ENCODE measurements at regions of chr20 and their contacts with region 1.

Region 1: DNA sequence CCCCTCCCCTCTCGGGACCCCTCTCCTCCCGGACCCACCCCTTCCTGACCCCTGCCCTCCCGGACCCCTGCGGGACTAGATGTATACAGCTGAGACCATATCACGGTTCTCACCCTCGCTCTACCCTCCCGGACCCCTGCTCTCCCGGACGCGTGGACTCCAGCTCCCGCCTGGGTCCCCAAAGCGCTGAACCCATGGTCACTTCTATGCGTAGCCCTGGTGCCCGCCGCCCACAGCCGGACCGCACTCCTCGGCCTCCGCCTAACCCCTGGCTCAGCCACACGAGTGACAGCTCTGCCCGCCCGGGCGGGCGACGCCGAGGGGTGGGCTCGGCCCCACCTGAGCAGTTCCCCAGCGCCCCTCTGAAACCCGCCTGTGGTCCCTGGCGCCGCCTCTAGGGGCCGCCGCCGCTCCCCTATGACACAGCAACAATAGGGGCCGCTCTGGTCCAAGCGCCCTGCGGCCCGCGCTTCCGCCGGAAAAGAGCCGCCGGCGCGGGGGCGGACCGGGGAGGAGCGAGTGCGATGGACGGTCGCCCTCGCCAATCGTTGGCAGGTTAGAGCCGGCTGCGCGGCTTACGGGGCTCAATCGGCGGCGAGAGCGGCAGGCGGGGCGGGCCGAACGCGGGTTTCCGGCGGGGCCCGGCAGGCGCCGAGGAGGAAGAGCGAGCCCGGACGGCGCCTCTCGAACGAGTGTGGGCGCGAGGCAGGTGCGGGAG is at the start of gene ADRM1:
- DNase-seq: peak; percentile 97
- H3K4me3 ChIP-seq: peak within 1 kb of the TSS; percentile 69 to 95 (median 88)
- H3K27ac ChIP-seq: peak within 1 kb of the TSS; percentile 65
- H3K4me1 ChIP-seq: peaks cover 32% of the 10 kb centered on the region
- H3K27me3 ChIP-seq: no peaks in the 10 kb centered on the region
- CTCF ChIP-seq: peak; percentile 46 to 94
- total RNA-seq, gene ADRM1: 139 to 140 TPM

Region 2: DNA sequence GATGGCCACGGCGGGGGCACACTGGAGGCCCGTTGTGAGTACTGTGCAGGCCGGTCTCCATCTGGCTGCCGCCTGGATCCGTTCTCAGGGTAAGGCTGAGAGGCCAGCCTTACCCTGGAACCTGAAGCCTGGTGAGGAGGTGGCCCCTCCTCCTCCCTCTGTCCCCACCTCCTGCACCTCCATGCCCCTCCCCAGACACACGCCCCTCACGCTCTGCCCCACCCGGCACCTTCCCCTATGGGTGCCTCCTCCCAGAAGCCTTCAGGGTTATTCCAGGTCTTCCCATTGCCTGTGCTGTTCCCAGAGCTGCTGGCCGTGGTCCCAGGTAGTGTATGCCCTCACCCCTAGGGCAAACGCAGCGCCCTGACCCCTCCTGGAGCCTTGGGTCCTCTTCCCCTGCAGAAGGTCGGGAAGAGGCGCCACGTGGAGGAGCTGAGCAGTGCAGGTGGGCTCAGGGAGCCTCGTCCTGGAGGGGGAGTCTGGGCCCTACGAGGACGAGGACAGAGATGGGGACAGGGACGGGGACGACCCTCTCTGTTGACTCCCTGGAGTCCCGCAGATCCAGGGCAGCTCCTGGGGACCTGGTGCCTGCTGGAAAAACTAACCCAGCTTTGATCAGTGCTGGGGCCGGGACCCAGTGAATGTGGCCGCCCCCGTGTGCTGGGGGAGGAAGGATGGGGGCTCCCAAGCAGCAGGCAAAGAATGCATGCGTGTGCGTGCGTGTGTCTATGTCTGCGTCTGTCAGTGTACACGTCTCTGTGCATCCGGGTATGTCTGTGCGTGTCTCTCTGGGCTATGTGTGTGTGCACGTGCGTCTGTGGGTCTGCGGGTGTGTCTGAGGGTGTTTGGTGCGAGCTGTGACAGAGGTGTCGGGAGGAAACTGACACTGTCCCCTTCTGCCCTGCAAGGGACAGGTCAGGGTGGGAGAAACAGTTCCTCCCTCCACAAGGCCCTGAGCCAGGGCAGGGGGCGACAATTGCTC is 74.2 kb before region 1 on chr20:
- CTCF ChIA-PET with region 1: no interaction called
- dilution Hi-C with region 1: no loop called
- in situ Hi-C with region 1: no loop called
- intact Hi-C with region 1: no loop called
- DNase-seq: no peak
- H3K4me3 ChIP-seq: no peak overlapping the region
- H3K27ac ChIP-seq: no peak overlapping the region
- H3K4me1 ChIP-seq: no peaks in the 10 kb centered on the region
- H3K27me3 ChIP-seq: peaks cover 5% of the 10 kb centered on the region
- CTCF ChIP-seq: no peak

Region 3: DNA sequence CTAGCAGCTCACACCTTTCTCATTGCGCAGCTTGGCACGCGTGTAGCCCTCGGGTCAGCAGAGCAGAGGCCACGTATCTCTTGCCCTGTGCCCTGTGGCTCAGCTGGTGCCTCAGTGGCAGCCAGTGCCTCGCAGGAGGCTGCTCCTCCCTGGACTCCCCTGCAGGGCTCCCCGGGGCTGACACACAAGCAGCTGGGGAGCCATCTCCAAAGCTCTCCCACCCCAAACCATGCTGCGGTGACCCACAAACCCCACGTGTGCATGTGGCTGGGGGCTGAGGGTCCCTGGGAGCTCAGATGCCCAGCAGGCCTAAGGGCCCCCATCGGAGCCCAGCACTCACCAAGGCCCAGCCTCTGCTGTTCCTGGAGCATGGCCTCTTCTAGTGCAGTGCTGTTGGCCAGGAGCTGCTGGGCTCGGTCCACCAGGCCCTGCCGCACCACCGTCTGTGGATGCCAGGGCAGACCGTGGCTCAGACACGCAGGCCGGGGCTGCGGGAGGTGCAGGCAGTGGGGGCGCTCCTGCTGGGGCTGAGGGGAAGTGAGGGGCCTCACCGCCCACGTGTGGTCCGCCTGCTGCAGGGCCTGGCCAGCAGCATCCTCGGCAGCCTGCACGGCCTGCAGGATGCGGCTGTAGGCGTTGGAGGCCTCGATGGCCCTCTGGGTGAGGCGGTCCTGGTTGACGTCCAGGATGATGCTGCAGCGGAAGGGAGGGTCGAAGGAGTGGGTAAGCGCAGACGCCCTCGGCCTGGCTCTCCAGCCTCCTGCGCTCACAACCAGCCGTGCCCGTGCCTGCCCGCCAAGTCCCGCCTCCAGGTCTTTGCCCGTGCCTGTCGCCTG is 14.0 kb after region 1 on chr20:
- CTCF ChIA-PET with region 1: no interaction called
- dilution Hi-C with region 1: no loop called
- in situ Hi-C with region 1: no loop called
- intact Hi-C with region 1: loop called (anchors 2 kb)
- DNase-seq: peak; percentile 78
- H3K4me3 ChIP-seq: no peak overlapping the region
- H3K27ac ChIP-seq: no peak overlapping the region
- H3K4me1 ChIP-seq: peaks cover 15% of the 10 kb centered on the region
- H3K27me3 ChIP-seq: no peaks in the 10 kb centered on the region
- CTCF ChIP-seq: no peak

Region 4: DNA sequence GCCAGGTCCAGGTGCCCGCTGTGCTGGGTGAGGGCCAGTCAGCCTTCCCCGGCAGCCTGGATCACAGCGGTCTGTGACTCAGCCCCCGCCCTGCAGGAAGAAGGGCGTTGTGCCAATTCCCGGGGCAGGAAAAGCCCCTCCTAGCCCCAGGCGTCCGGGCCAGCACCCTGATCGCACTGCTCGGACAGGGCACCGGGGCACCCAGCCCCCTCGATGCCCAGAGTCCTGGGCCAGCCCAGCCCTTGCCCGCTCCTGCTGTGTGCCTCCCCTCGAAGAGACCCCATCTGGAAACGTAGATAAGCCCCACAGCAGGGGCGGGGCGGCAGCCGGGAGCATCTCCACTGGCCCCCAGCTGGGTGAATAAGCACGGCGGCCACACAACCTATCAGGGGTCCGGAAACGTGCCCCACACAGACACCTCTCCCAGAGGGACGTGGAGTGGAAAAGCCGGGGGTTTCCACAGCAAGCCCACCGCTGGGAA is 54.7 kb after region 1 on chr20:
- CTCF ChIA-PET with region 1: no interaction called
- dilution Hi-C with region 1: no loop called
- in situ Hi-C with region 1: no loop called
- intact Hi-C with region 1: loop called (anchors 2 kb)
- DNase-seq: peak; percentile 58
- H3K4me3 ChIP-seq: no peak overlapping the region
- H3K27ac ChIP-seq: no peak overlapping the region
- H3K4me1 ChIP-seq: peaks cover 87% of the 10 kb centered on the region
- H3K27me3 ChIP-seq: no peaks in the 10 kb centered on the region
- CTCF ChIP-seq: no peak

Region 5: DNA sequence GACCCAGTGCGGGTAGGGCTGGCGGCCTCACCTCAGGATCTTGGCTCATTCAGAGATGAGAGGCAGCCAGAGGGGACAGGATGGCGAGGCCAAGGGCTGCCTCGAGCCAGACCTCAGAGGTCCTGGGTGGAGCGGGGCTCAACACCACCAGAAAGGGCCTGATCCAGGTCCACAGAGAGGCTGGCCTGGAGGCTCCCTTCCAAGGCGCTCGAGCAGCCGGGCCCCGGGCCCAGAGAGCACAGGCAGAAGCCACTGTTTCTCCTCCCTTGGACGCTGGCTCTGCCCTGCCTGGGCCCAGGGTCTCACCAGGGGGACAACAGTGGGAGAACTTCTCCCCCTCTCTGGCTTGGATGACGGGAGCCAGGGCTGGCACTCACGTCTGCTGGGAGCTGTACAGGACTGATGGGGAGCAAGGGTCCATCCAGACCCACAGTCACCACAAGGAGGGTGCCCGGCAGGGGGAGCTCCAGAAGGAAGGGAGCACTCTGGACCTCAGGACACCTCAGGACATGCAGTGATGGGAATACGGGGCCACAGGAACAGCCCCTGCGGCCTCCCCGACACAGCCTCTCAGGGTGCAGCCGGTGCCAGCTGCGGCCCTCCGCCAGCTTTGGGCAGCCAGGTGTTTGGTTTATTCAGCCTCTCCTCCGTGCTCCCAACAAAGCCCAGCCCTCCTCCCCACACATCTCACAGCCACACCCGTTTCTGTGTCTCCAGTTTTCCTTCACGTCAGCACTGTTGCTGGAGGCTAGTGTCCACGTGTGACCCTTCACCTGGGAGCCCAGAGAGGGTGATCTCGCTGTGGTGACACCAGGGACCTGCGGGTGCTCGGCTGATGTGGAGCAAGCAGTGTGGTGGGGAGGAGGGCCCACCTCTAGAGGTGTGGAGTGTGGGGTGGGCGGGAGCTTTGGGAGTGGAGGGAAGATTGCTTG is 93.1 kb after region 1 on chr20:
- CTCF ChIA-PET with region 1: no interaction called
- dilution Hi-C with region 1: loop called (anchors 5 kb)
- in situ Hi-C with region 1: no loop called
- intact Hi-C with region 1: no loop called
- DNase-seq: no peak
- H3K4me3 ChIP-seq: no peak overlapping the region
- H3K27ac ChIP-seq: no peak overlapping the region
- H3K4me1 ChIP-seq: no peaks in the 10 kb centered on the region
- H3K27me3 ChIP-seq: no peaks in the 10 kb centered on the region
- CTCF ChIP-seq: no peak

Region 6: DNA sequence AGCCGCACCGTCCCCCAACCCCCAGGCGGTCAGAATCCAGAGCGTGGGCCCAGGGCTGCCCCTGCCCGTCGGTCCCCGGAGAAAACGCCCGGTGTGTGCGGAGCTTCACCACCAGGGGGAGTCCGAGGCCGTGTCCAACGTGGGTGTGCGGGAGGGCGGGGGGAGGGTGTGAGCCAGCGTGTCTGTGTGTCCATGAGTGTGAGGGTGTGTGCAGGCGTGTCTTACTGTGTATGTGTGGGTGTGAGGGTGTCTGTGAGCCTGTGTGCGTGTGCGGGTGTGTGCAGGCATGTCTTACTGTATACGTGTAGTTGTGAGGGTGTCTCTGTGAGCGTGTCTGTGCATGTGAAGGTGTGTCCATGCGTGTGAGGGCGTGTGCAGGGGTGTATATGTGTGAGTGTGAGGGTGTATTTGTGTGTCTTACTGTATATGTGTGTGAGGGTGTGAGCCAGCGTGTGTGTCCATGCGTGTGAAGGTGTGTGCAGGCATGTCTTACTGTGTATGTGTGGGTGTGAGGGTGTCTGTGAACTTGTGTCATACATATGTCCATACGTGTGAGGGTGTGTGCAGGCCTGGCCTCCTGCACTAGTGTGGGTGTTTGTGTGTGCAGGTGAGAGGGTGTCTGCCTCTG is 197.9 kb after region 1 on chr20:
- CTCF ChIA-PET with region 1: no interaction called
- dilution Hi-C with region 1: no loop called
- in situ Hi-C with region 1: no loop called
- intact Hi-C with region 1: loop called (anchors 2 kb)
- DNase-seq: peak; percentile 29
- H3K4me3 ChIP-seq: no peak overlapping the region
- H3K27ac ChIP-seq: no peak overlapping the region
- H3K4me1 ChIP-seq: peaks cover 9% of the 10 kb centered on the region
- H3K27me3 ChIP-seq: no peaks in the 10 kb centered on the region
- CTCF ChIP-seq: peak; percentile 56 to 86

Region 7: GRCh38 chr20:62616728-62617621 is 314.5 kb after region 1 on chr20:
- CTCF ChIA-PET with region 1: no interaction called
- dilution Hi-C with region 1: no loop called
- in situ Hi-C with region 1: no loop called
- intact Hi-C with region 1: loop called (anchors 2 kb)
- DNase-seq: peak; percentile 26
- H3K4me3 ChIP-seq: no peak overlapping the region
- H3K27ac ChIP-seq: no peak overlapping the region
- H3K4me1 ChIP-seq: no peaks in the 10 kb centered on the region
- H3K27me3 ChIP-seq: no peaks in the 10 kb centered on the region
- CTCF ChIP-seq: peak; percentile 84 to 99

Region 8: DNA sequence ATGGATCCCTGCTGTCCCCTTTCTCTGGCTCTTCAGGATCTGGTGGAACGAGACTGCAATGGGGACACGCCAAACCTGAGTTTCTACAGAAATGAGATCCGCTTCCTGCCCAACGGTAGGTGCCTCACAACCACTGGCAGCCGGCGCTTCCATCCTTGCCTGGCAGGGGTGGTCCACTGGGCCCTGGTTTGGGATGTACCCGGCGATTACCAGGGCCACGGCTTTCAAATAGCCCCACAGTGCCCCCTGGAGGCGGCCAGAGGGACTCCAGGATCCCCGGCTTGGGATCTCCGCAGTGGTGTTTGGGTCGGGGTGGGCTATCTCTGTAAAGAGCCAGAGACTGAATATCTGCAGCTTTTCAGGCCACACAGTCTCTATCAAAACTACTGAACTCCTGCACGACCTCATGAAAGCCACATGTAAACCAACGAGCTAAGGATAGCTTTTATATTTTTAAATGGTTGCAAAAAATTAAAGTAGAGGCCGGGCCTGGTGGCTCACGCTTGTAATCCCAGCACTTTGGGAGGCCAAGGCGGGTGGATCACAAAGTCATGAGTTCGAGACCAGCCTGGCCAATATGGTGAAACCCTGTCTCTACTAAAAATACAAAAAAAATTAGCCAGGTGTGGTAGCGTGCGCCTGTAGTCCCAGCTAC is 505.8 kb after region 1 on chr20:
- CTCF ChIA-PET with region 1: no interaction called
- dilution Hi-C with region 1: no loop called
- in situ Hi-C with region 1: no loop called
- intact Hi-C with region 1: loop called (anchors 2 kb)
- DNase-seq: no peak
- H3K4me3 ChIP-seq: no peak overlapping the region
- H3K27ac ChIP-seq: no peak overlapping the region
- H3K4me1 ChIP-seq: peaks cover 12% of the 10 kb centered on the region
- H3K27me3 ChIP-seq: no peaks in the 10 kb centered on the region
- CTCF ChIP-seq: peak; percentile 68 to 90

Region 9: DNA sequence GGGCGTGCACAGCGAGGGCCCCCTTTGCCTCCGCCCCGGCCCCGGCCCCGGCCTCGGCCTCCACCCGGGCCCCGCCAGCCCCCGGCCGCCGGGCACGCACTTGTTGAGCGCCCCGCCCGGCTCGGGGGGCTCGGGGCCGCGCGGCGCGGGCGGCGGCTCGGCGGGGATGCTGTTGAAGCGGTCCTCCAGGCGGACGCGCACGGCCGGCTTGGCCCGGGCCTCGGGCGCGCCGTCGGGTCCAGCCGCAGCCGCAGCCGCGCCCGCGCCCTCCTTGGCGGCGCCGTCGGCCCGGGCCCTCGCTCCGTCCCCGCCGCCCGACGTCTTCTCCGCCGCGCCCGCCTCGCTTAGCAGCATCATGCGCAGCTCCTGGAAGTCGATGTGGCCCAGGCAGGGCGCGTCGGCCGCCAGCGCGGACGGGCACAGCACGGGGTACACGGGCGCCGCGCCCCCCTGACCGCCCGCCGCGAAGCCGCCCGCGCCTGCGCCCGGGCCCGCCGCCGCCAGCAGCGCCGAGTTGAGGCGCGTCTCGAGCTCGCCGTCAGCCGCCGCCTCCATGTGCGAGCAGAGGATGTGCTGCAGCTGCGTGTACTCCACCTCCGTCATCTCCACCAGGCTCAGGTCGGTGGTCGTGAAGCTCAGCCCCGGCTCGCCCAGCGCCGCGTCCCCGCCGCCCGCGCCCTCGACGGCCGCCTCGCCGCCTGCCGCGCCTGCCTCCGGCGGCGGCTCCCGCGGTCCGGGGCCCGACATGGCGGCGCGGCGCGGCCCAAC is 558.6 kb after region 1 on chr20:
- CTCF ChIA-PET with region 1: no interaction called
- dilution Hi-C with region 1: no loop called
- in situ Hi-C with region 1: no loop called
- intact Hi-C with region 1: no loop called
- DNase-seq: no peak
- H3K4me3 ChIP-seq: peak overlapping the region; percentile 51 to 84 (median 69)
- H3K27ac ChIP-seq: no peak overlapping the region
- H3K4me1 ChIP-seq: peaks cover 25% of the 10 kb centered on the region
- H3K27me3 ChIP-seq: no peaks in the 10 kb centered on the region
- CTCF ChIP-seq: no peak